WTC11 (cell line): ENCODE measurements at regions of chr12 and their contacts with region 1.

Region 1: DNA sequence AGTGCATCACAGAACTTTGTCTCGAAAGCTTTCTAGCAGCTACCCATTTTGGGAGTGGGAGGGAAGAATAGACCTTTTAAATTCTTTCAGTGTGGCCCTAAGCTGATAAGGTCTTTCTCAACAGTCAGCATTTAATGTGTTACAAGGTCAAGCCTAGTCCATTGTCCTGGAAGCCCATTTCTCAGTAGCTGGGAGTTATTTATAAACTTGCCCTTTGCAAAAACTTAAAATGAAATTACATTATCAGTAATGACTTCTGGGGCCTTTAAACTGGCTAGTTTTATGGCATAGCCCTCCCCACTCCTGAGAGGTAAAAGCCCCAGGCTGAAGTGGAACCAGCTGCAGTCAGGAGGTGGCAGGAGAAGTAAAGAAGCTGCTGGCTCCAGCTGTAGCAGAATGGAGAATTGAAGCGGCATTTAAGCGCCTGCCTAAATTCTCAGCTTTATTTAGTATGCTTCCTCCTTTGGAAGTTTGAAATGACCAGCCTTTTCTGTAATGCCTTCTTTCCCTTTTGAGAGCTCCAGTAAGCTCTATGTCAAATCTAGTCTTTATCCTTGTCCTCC is 12.4 kb downstream of the COPZ1 start:
- DNase-seq: no peak
- ATAC-seq: no peak
- H3K4me3 Mint-ChIP-seq: no peak overlapping the region
- H3K27ac Mint-ChIP-seq: no peak overlapping the region
- H3K4me1 Mint-ChIP-seq: peaks cover 5% of the 10 kb centered on the region
- H3K27me3 Mint-ChIP-seq: no peaks in the 10 kb centered on the region
- CTCF ChIP-seq: no peak

Region 2: GRCh38 chr12:54251667-54252284 is 85.6 kb before region 1 on chr12:
- CTCF ChIA-PET with region 1: interaction called, 13 read pairs
- POLR2A ChIA-PET with region 1: no interaction called
- DNase-seq: no peak
- ATAC-seq: peak; percentile 72; the same call in 1 of the 2 replicates
- H3K4me3 Mint-ChIP-seq: no peak overlapping the region
- H3K27ac Mint-ChIP-seq: no peak overlapping the region
- H3K4me1 Mint-ChIP-seq: no peaks in the 10 kb centered on the region; the same call in 1 of the 2 replicates
- H3K27me3 Mint-ChIP-seq: no peaks in the 10 kb centered on the region
- CTCF ChIP-seq: no peak

Region 3: DNA sequence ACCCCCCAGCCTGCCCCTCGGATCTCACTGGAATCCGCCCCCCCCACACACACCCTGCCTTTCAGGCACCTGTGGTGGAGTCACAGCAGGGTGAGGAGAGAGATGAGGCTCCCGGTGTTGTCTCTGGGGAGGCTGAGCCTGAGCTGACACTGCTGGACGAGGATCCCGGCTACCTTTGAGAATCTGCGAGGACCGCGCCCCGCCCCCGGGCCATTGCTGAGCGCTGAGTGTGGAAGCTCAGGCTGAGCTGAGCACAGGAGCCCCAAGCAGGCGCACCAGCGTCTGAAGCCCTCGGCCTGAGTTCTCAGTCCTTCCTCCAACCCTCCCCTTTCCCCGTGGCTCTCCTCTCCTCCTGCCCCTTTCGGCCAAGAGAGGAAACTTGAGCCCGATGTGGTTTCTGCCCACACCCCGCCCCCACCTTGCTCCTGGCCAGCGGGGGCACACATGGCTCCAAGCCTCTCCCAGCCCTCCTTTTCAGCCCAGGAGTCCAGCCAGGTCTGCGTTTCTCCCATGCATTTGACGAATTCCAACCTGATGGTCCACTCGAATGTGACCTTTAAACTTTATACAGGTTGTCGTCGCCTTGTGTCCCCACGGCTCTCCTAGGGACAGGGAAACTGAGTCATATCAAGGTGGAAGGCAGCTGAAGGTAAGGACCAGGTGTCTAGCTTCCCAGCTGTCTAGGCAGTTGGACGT is 36.5 kb before region 1 on chr12 and contains the start of gene NFE2:
- CTCF ChIA-PET with region 1: interaction called, 15 read pairs
- POLR2A ChIA-PET with region 1: no interaction called
- DNase-seq: peak; percentile 86
- ATAC-seq: peak; percentile 94
- H3K4me3 Mint-ChIP-seq: peak within 1 kb of the TSS; percentile 68
- H3K27ac Mint-ChIP-seq: peak within 1 kb of the TSS; percentile 90
- H3K4me1 Mint-ChIP-seq: peaks cover 53% of the 10 kb centered on the region
- H3K27me3 Mint-ChIP-seq: peaks cover 15% of the 10 kb centered on the region
- CTCF ChIP-seq: no peak
- total RNA-seq, gene NFE2: 2.4 to 3.0 TPM (median 3.0 TPM) in 3 replicates

Region 4: GRCh38 chr12:54352022-54352531 is 14.7 kb after region 1 on chr12:
- CTCF ChIA-PET with region 1: interaction called, 200 read pairs
- POLR2A ChIA-PET with region 1: interaction called, 7 read pairs
- DNase-seq: peak; percentile 70
- ATAC-seq: peak; percentile 55
- H3K4me3 Mint-ChIP-seq: peak overlapping the region; percentile 87
- H3K27ac Mint-ChIP-seq: peak overlapping the region; percentile 92
- H3K4me1 Mint-ChIP-seq: peaks cover 47% of the 10 kb centered on the region
- H3K27me3 Mint-ChIP-seq: peaks cover 18% of the 10 kb centered on the region
- CTCF ChIP-seq: no peak

Region 5: GRCh38 chr12:54368709-54369583 is 31.6 kb after region 1 on chr12:
- CTCF ChIA-PET with region 1: interaction called, 200 read pairs
- POLR2A ChIA-PET with region 1: no interaction called
- DNase-seq: peak; percentile 90
- ATAC-seq: peak; percentile 49
- H3K4me3 Mint-ChIP-seq: peak overlapping the region; percentile 75
- H3K27ac Mint-ChIP-seq: no peak overlapping the region
- H3K4me1 Mint-ChIP-seq: peaks cover 24% of the 10 kb centered on the region
- H3K27me3 Mint-ChIP-seq: peaks cover 49% of the 10 kb centered on the region
- CTCF ChIP-seq: peak; percentile 73